ENCODE measurements at regions of chr1 and their contacts with region 1.

Region 1: GRCh38 chr1:84143796-84144565 is at the start of gene PRKACB:
- DNase-seq: no peak

Region 2: DNA sequence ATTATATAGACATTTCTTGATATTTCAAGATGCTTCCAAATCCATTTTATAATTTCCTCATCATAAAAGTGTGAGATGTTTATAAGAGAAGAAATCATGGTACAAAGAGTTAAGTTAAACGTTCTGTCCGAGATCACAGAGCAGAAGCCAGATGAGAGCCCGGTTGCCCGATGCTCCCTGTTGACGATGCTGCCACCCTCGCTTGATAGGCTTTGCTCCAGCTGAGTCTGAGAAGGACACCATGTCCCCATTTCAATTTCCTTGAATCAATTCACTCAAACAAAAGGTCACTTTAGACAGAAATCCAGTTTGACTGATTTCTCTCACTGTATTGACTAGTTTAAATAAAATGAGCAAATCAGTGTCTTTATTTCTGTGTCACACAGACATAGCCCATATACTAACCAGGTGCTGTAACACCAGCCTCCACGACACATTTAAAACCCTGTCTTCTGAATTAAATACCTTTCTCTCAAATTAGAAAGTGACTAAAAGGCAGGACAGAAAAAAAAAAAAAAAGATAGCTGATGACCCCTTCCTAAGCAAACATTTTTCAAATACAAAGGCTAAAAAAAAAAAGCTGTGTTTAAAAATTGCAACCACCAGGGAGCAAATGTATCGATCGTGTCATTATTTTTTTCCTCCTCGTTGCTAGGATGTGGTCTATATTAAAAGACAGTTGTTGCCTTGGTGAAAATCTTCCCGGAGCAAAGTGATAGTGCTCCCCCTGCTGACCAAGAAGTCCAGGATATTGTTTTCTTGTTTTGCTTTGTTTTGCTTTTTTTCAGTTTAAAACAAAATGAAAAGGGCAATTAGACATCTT is 289.5 kb after region 1 on chr1:
- intact Hi-C with region 1: loop called (anchors 5 kb)
- DNase-seq: peak; percentile 17 to 89 (median 66)

Region 3: GRCh38 chr1:84620720-84621313 is 476.8 kb after region 1 on chr1:
- intact Hi-C with region 1: loop called (anchors 10 kb)
- DNase-seq: peak; percentile 37 to 90 (median 79)

Measured in head of caudate nucleus (tissue), 42 donors.